ENCODE measurements at regions of chr4 and their contacts with region 1.

Region 1: GRCh38 chr4:82890901-82891706 is at the start of gene SEC31A:
- DNase-seq: peak; percentile 96 to 97
- ATAC-seq: peak; percentile 98 to 99 (median 99)
- H3K4me3 ChIP-seq: peak within 1 kb of the TSS; percentile 42 to 96 (median 78)
- H3K27ac ChIP-seq: peak within 1 kb of the TSS; percentile 91 to 99 (median 97)
- H3K4me1 ChIP-seq: peaks cover 0 to 48% (median 39%) of the 10 kb centered on the region in 9 donors
- H3K27me3 ChIP-seq: no peaks in the 10 kb centered on the region
- CTCF ChIP-seq: peak in 3 of 9 donors; percentile 18 to 38 (median 27)
- total RNA-seq, gene SEC31A: 86.3 to 163 (median 124) TPM

Region 2: GRCh38 chr4:83034630-83035494 is 143.8 kb after region 1 on chr4 and contains the start of gene COPS4:
- intact Hi-C with region 1: loop called in 5 of 10 experiments (anchors 5 to 10 kb)
- DNase-seq: peak; percentile 92 to 98
- ATAC-seq: peak; percentile 100
- H3K4me3 ChIP-seq: peak within 1 kb of the TSS; percentile 41 to 92 (median 67)
- H3K27ac ChIP-seq: peak within 1 kb of the TSS; percentile 62 to 95 (median 88)
- H3K4me1 ChIP-seq: peaks cover 0 to 27% (median 22%) of the 10 kb centered on the region in 9 donors
- H3K27me3 ChIP-seq: no peaks in the 10 kb centered on the region
- CTCF ChIP-seq: peak; percentile 36 to 74 (median 52)
- total RNA-seq, gene COPS4: 48.1 to 65.1 (median 57.5) TPM

Region 3: GRCh38 chr4:83043801-83044407 is 152.8 kb after region 1 on chr4:
- intact Hi-C with region 1: loop called in 5 of 10 experiments (anchors 5 to 10 kb)
- DNase-seq: no peak
- ATAC-seq: peak in 2 of 8 donors; percentile 38 to 54
- H3K4me3 ChIP-seq: no peak overlapping the region
- H3K27ac ChIP-seq: no peak overlapping the region
- H3K4me1 ChIP-seq: peaks cover 0 to 10% (median 5%) of the 10 kb centered on the region in 9 donors
- H3K27me3 ChIP-seq: no peaks in the 10 kb centered on the region
- CTCF ChIP-seq: no peak

Region 4: GRCh38 chr4:83582289-83582769 is 691.2 kb after region 1 on chr4:
- intact Hi-C with region 1: loop called in 1 of 10 experiments (anchors 5 kb)
- DNase-seq: peak; percentile 16 to 26
- ATAC-seq: peak; percentile 64 to 92 (median 88)
- H3K4me3 ChIP-seq: no peak overlapping the region
- H3K27ac ChIP-seq: peak overlapping the region in 5 of 10 donors; percentile 14 to 44 (median 41)
- H3K4me1 ChIP-seq: peaks cover 0 to 36% (median 11%) of the 10 kb centered on the region in 9 donors
- H3K27me3 ChIP-seq: no peaks in the 10 kb centered on the region
- CTCF ChIP-seq: peak in 3 of 9 donors; percentile 23 to 26 (median 26)